CD8-positive, alpha-beta memory T cell (primary cell): ENCODE measurements at regions of chr17 and their contacts with region 1.

Region 1: DNA sequence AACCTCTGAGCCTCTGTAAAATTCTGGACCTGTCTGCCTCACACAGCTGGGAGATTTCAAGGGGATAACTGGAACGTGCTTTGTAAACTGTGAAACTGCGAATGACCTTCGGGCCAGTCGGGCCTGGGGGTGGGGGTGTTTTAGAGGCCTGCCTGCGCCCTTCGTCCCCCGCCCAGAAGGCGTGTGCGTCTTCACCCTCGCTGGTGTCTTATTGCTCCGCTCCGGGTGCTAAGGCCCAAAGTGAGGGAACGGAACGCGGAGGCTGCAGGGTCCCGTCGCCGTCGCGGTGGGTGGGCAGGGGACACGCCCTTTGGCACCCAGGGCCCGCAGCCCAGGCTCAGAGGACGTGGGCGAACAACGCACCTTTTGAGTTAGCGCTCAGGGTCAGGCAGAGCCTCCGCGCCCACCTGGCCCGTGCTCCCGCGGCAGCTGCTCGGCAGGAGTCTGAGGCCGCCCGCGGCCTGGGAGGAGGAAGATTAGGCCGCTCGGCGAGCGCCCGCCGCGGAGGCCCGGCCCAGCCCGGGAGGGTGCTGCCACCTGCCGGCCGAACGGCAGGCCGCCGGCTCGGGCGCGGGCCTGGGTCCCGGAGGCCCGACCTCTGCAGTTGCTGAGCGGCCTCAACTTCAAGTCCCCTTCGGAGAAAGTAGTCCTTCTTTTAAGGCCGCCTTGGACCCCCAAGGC is 29.7 kb downstream of the DCAKD start:
- DNase-seq: peak; percentile 48 to 67 (median 57)
- H3K4me3 ChIP-seq: no peak overlapping the region
- H3K4me3 Mint-ChIP-seq: peak overlapping the region; percentile 12 to 74 (median 62)
- H3K27ac ChIP-seq: no peak overlapping the region
- H3K27ac Mint-ChIP-seq: peak overlapping the region in 1 of 8 donors; percentile 84
- H3K4me1 ChIP-seq: peaks cover 20% of the 10 kb centered on the region
- H3K4me1 Mint-ChIP-seq: peaks cover 13 to 21% (median 21%) of the 10 kb centered on the region in 3 donors
- H3K27me3 ChIP-seq: peaks cover 32% of the 10 kb centered on the region
- H3K27me3 Mint-ChIP-seq: peaks cover 19 to 37% of the 10 kb centered on the region in 2 donors

Region 2: DNA sequence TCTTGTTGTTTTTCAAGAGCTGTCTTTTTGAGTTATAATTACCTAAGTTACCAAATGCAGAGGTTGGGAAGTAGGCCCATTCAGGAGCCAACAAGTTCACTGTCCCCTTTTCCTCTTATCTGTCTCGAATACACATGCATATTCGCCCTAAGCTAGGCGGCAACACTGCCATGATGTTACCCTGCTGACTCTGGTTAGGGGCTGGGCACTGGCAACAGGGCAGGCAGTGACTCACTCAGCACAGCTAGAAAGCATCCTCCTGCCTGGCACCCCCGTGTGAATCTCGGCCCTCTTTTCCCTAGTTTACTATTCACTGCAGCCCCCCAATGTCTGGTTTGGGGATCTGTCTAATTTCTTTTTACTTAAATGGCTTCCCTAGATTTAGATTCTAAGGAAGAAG is 299.5 kb before region 1 on chr17:
- CTCF ChIA-PET with region 1: no interaction called
- POLR2A ChIA-PET with region 1: no interaction called
- DNase-seq: no peak
- H3K4me3 ChIP-seq: no peak overlapping the region
- H3K4me3 Mint-ChIP-seq: no peak overlapping the region
- H3K27ac ChIP-seq: no peak overlapping the region
- H3K27ac Mint-ChIP-seq: no peak overlapping the region
- H3K4me1 ChIP-seq: no peaks in the 10 kb centered on the region
- H3K4me1 Mint-ChIP-seq: no peaks in the 10 kb centered on the region
- H3K27me3 ChIP-seq: no peaks in the 10 kb centered on the region
- H3K27me3 Mint-ChIP-seq: no peaks in the 10 kb centered on the region

Region 3: DNA sequence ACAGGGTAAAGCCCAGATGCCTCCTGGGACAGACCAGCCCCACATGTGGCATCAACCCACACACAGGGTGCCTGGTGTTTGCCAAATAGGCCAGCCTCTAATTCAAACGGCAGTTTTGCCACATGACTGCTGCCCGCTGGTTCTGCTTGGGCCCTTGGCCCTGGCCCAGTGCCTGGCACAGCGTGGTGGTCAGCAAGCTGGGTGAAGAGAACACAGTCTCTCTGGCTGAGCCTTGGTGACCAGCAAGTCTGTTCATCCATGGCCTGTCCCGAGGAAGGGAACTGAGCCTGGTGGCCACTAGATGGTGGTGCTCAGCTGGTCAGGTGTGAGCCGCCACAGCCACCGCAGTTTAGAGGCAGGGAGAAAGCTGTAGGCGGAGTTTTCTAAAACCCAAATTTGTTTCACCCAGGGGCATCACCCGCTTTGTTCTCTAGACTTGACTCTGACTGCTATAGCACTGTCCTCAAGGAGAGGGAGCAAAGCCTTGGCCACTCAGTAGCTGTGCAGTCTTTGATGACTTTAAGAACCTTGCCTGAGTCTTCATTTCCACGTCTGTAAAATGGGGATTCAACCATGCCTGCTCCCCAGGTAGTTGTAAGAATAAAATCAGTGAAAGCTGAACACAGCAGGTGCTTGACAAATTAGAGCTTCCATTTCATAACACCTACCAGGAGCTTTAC is 101.7 kb before region 1 on chr17:
- CTCF ChIA-PET with region 1: interaction called, 45 read pairs
- POLR2A ChIA-PET with region 1: no interaction called
- DNase-seq: peak; percentile 17 to 70 (median 31)
- H3K4me3 ChIP-seq: no peak overlapping the region
- H3K4me3 Mint-ChIP-seq: no peak overlapping the region
- H3K27ac ChIP-seq: no peak overlapping the region
- H3K27ac Mint-ChIP-seq: peak overlapping the region in 1 of 8 donors; percentile 75
- H3K4me1 ChIP-seq: no peaks in the 10 kb centered on the region
- H3K4me1 Mint-ChIP-seq: no peaks in the 10 kb centered on the region
- H3K27me3 ChIP-seq: no peaks in the 10 kb centered on the region
- H3K27me3 Mint-ChIP-seq: peaks cover 2 to 21% of the 10 kb centered on the region in 2 donors

Region 4: DNA sequence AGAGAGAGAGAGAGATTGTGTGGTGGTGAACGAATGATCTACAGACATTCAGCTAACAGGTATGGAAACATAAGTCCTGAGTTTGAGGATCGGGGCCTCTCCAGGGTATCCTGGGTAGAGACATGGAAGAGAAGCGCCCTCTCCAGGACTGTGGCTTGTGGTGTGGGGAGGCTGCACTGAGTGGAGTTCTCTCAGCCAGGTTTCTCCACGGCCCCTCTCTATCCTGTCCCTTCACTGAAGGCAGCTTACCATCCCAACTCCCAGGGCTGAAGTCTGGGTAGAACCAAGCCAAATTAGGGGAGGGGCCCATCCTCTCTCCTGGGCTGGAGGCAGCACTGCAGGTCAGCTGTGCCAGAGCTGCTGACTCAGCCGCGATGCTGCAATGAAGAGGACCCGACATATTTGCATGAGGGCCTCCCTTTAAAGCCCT is 59.8 kb before region 1 on chr17:
- CTCF ChIA-PET with region 1: no interaction called
- POLR2A ChIA-PET with region 1: no interaction called
- DNase-seq: no peak
- H3K4me3 ChIP-seq: no peak overlapping the region
- H3K4me3 Mint-ChIP-seq: no peak overlapping the region
- H3K27ac ChIP-seq: no peak overlapping the region
- H3K27ac Mint-ChIP-seq: no peak overlapping the region
- H3K4me1 ChIP-seq: peaks cover 2% of the 10 kb centered on the region
- H3K4me1 Mint-ChIP-seq: peaks cover 4 to 18% (median 5%) of the 10 kb centered on the region in 3 donors
- H3K27me3 ChIP-seq: peaks cover 45% of the 10 kb centered on the region
- H3K27me3 Mint-ChIP-seq: peaks cover 61 to 77% of the 10 kb centered on the region in 2 donors

Region 5: GRCh38 chr17:45098869-45099616 is 77.3 kb after region 1 on chr17:
- CTCF ChIA-PET with region 1: interaction called, 17 read pairs
- POLR2A ChIA-PET with region 1: no interaction called
- DNase-seq: peak; percentile 43 to 79 (median 49)
- H3K4me3 ChIP-seq: no peak overlapping the region
- H3K4me3 Mint-ChIP-seq: no peak overlapping the region
- H3K27ac ChIP-seq: no peak overlapping the region
- H3K27ac Mint-ChIP-seq: peak overlapping the region in 6 of 8 donors; percentile 16 to 72 (median 32)
- H3K4me1 ChIP-seq: no peaks in the 10 kb centered on the region
- H3K4me1 Mint-ChIP-seq: peaks cover 0 to 7% (median 0%) of the 10 kb centered on the region in 3 donors
- H3K27me3 ChIP-seq: no peaks in the 10 kb centered on the region
- H3K27me3 Mint-ChIP-seq: no peaks in the 10 kb centered on the region